Left ventricle myocardium inferior (tissue), 1 donor: ENCODE measurements at regions of chr9 and their contacts with region 1.

Region 1: DNA sequence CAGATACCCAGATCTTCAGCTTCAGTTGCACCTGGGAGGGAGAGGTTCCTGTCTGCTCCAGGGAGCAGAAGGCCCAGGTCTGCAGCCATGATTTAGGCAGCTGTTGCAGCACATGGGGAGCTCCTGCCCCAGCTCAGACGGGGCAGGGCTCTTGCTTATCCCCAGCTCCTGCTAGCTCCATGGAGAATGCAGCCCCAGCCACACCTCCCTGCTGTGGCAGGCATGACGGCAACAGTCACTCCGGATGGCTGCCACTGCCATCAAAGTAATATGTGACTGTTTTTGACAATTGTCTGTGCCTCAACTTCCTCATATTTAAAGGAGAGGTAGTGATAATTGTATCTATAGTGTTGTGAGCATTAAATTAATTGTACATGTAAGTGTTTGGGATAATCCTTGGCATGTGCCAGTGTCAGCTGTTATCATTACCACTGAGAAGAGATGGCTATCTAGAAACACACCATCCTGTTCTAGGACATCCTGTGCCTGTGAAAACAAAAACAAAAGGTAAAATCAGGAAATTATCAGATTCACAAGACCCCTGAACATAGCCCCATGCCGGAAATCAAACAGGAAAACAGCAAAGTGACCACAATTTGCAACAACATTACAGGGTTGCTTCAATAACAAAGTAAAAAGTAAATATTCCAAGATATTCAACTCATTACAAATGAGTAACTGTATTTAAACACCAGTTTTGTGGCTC is 1048.8 kb upstream of the ACO1 start:
- DNase-seq: no peak
- H3K4me3 ChIP-seq: no peak overlapping the region
- H3K27ac ChIP-seq: peak overlapping the region; percentile 70
- H3K4me1 ChIP-seq: peaks cover 21% of the 10 kb centered on the region
- H3K27me3 ChIP-seq: no peaks in the 10 kb centered on the region
- CTCF ChIP-seq: no peak

Region 2: DNA sequence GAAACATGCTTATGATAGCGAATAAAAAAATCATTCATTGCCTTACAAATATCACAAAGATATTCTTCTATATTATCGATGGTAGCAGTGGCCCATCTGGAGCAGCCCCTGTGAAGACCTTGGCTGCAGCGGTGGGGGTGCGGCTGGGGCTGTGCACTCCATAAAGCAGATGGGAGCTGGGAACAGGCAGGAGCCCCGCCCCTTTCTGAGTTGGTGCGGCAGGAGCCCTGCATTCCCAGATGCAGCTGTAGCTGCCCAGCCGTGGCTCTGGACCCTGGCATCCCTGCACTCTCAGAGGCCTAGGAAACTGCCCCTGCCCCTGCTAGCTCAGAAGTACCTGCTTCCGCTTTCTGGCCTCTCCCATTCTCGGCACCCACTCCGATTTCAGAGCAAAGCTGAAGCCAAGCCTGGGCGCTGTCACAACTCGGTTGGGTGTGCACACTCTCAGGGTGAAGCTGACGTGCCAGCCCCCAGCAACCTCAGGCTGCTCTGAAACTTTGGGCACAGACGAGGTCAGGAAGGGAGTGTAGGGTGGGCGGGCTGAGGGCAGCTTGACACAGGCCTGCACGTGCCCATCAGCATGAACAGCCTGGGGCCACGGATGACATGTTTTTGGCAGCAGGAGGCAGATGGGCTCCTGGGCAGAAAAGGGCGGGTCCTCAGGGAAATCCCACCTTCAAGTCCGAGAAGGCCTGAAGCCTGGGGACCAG is 392.1 kb before region 1 on chr9:
- intact Hi-C with region 1: no loop called
- DNase-seq: no peak
- H3K4me3 ChIP-seq: no peak overlapping the region
- H3K27ac ChIP-seq: no peak overlapping the region
- H3K4me1 ChIP-seq: no peaks in the 10 kb centered on the region
- H3K27me3 ChIP-seq: no peaks in the 10 kb centered on the region
- CTCF ChIP-seq: no peak

Region 3: GRCh38 chr9:31394015-31394473 is 58.4 kb after region 1 on chr9:
- intact Hi-C with region 1: loop called (anchors 2 kb)
- DNase-seq: no peak
- H3K4me3 ChIP-seq: no peak overlapping the region
- H3K27ac ChIP-seq: no peak overlapping the region
- H3K4me1 ChIP-seq: peaks cover 15% of the 10 kb centered on the region
- H3K27me3 ChIP-seq: no peaks in the 10 kb centered on the region
- CTCF ChIP-seq: no peak